Activated CD4-positive, alpha-beta memory T cell treated with anti-CD3 and anti-CD28 coated beads for 36 hours (primary cell): ENCODE measurements at regions of chr14 and their contacts with region 1.

Region 1: GRCh38 chr14:101876555-101876938 is 87.8 kb upstream of the DYNC1H1 start:
- DNase-seq: peak; percentile 87
- H3K4me3 Mint-ChIP-seq: peak overlapping the region; percentile 56
- H3K27ac Mint-ChIP-seq: peak overlapping the region; percentile 84
- H3K4me1 Mint-ChIP-seq: peaks cover 91% of the 10 kb centered on the region
- H3K27me3 Mint-ChIP-seq: no peaks in the 10 kb centered on the region

Region 2: GRCh38 chr14:101731187-101732080 is 145.1 kb before region 1 on chr14:
- CTCF ChIA-PET with region 1: no interaction called
- POLR2A ChIA-PET with region 1: no interaction called
- intact Hi-C with region 1: loop called (anchors 2 kb)
- DNase-seq: peak; percentile 94
- H3K4me3 Mint-ChIP-seq: peak overlapping the region; percentile 74
- H3K27ac Mint-ChIP-seq: peak overlapping the region; percentile 97
- H3K4me1 Mint-ChIP-seq: peaks cover 61% of the 10 kb centered on the region
- H3K27me3 Mint-ChIP-seq: no peaks in the 10 kb centered on the region

Region 3: DNA sequence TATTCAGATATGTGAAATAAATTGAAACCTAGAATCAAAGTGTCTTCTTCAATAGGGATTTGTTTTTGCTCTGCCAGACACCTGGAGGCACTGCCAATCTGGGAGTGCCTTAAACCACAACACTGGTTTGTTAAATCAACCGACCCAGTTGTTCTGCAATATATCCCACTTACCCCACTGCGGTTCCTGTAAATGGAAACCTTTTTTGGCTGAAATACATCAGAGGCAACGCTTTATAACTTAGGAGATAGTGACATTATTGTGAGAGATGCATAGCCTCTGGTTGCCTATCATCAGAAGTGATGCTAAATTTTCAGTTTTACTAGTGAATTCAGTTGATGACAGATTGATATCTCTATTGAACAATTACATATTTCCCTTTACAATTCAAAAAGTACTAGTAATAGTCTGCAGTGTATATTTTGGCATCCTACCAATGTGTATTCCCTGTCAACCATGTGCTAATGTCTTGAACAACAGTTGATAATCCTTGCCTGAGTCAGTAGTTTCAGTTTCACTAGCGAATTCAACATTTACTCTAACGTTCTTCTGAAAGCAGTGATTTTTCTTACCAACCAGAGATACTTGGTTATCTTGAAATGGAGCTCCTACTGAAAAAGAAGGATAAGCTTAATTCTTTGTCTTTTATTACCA is 84.5 kb before region 1 on chr14:
- CTCF ChIA-PET with region 1: interaction called, 3 read pairs
- POLR2A ChIA-PET with region 1: interaction called, 4 read pairs
- intact Hi-C with region 1: loop called (anchors 1 kb)
- DNase-seq: no peak
- H3K4me3 Mint-ChIP-seq: peak overlapping the region; percentile 16
- H3K27ac Mint-ChIP-seq: peak overlapping the region; percentile 8
- H3K4me1 Mint-ChIP-seq: peaks cover 30% of the 10 kb centered on the region
- H3K27me3 Mint-ChIP-seq: no peaks in the 10 kb centered on the region

Region 4: DNA sequence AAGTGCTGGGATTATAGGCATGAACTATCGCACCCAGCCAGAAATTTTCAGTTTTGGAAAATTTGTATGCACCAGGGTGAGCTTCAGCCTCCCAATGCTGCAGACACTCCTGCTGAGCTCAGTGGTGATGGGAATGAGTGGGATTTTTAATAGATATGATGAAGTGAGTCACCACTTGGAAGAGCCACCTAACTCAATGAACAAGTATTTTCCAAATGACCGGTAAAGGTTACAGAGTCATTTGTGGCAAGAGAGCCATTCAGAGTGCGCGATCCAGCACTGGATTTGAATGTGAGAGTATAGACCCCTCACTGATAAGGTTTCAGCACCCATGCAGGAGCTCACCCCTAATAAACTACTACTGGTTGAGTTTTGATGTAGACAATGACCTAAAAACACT is 14.4 kb before region 1 on chr14:
- CTCF ChIA-PET with region 1: interaction called, 6 read pairs
- POLR2A ChIA-PET with region 1: interaction called, 15 read pairs
- intact Hi-C with region 1: loop called (anchors 1 kb)
- DNase-seq: no peak
- H3K4me3 Mint-ChIP-seq: no peak overlapping the region
- H3K27ac Mint-ChIP-seq: peak overlapping the region; percentile 53
- H3K4me1 Mint-ChIP-seq: peaks cover 53% of the 10 kb centered on the region
- H3K27me3 Mint-ChIP-seq: no peaks in the 10 kb centered on the region

Region 5: GRCh38 chr14:101903111-101903561 is 26.6 kb after region 1 on chr14:
- CTCF ChIA-PET with region 1: no interaction called
- POLR2A ChIA-PET with region 1: no interaction called
- intact Hi-C with region 1: no loop called
- DNase-seq: no peak
- H3K4me3 Mint-ChIP-seq: no peak overlapping the region
- H3K27ac Mint-ChIP-seq: no peak overlapping the region
- H3K4me1 Mint-ChIP-seq: no peaks in the 10 kb centered on the region
- H3K27me3 Mint-ChIP-seq: no peaks in the 10 kb centered on the region

Region 6: GRCh38 chr14:101947906-101948665 is 71.5 kb after region 1 on chr14:
- CTCF ChIA-PET with region 1: interaction called, 6 read pairs
- POLR2A ChIA-PET with region 1: no interaction called
- intact Hi-C with region 1: loop called (anchors 1 kb)
- DNase-seq: peak; percentile 100
- H3K4me3 Mint-ChIP-seq: peak overlapping the region; percentile 92
- H3K27ac Mint-ChIP-seq: peak overlapping the region; percentile 95
- H3K4me1 Mint-ChIP-seq: peaks cover 15% of the 10 kb centered on the region
- H3K27me3 Mint-ChIP-seq: peaks cover 20% of the 10 kb centered on the region

Region 7: GRCh38 chr14:101972268-101972774 is 95.8 kb after region 1 on chr14:
- CTCF ChIA-PET with region 1: no interaction called
- POLR2A ChIA-PET with region 1: no interaction called
- intact Hi-C with region 1: no loop called
- DNase-seq: no peak
- H3K4me3 Mint-ChIP-seq: no peak overlapping the region
- H3K27ac Mint-ChIP-seq: no peak overlapping the region
- H3K4me1 Mint-ChIP-seq: peaks cover 32% of the 10 kb centered on the region
- H3K27me3 Mint-ChIP-seq: no peaks in the 10 kb centered on the region

Region 8: GRCh38 chr14:102390064-102390855 is 513.7 kb after region 1 on chr14:
- CTCF ChIA-PET with region 1: no interaction called
- POLR2A ChIA-PET with region 1: no interaction called
- intact Hi-C with region 1: no loop called
- DNase-seq: no peak
- H3K4me3 Mint-ChIP-seq: no peak overlapping the region
- H3K27ac Mint-ChIP-seq: no peak overlapping the region
- H3K4me1 Mint-ChIP-seq: peaks cover 6% of the 10 kb centered on the region
- H3K27me3 Mint-ChIP-seq: no peaks in the 10 kb centered on the region